GM12878 (cell line): ENCODE measurements at regions of chr12 and their contacts with region 1.

Region 1: GRCh38 chr12:85448548-85449139 is 168.6 kb downstream of the ALX1 start:
- DNase-seq: no peak
- ATAC-seq: peak; percentile 58
- H3K4me3 ChIP-seq: no peak overlapping the region
- H3K27ac ChIP-seq: no peak overlapping the region
- H3K4me1 ChIP-seq: no peaks in the 10 kb centered on the region
- H3K27me3 ChIP-seq: peaks cover 0 to 3% of the 10 kb centered on the region in 2 experiments; a peak in 1 of 4 replicates
- CTCF ChIP-seq: peak in 2 of 3 experiments; percentile 18 to 24; a peak in 3 of 6 replicates
- EP300 ChIP-seq: no peak
- POLR2A ChIP-seq: no peak
- RAD21 ChIP-seq: peak; percentile 66

Region 2: GRCh38 chr12:85076688-85077430 is 371.8 kb before region 1 on chr12:
- CTCF ChIA-PET with region 1: interaction called, 4 read pairs
- POLR2A ChIA-PET with region 1: no interaction called
- RAD21 ChIA-PET with region 1: interaction called, 9 read pairs
- SMC1A ChIA-PET with region 1: no interaction called
- in situ Hi-C with region 1: loop called (anchors 10 kb)
- intact Hi-C with region 1: loop called (anchors 5 kb)
- DNase-seq: no peak
- ATAC-seq: peak; percentile 88
- H3K4me3 ChIP-seq: no peak overlapping the region
- H3K27ac ChIP-seq: no peak overlapping the region
- H3K4me1 ChIP-seq: no peaks in the 10 kb centered on the region
- H3K27me3 ChIP-seq: no peaks in the 10 kb centered on the region
- CTCF ChIP-seq: peak; percentile 28 to 45 (median 30); a peak in 2 of 6 replicates
- EP300 ChIP-seq: no peak
- POLR2A ChIP-seq: no peak
- RAD21 ChIP-seq: peak; percentile 48; the same call in 1 of the 2 replicates

Region 3: GRCh38 chr12:85155787-85156186 is 292.9 kb before region 1 on chr12:
- CTCF ChIA-PET with region 1: no interaction called
- POLR2A ChIA-PET with region 1: no interaction called
- RAD21 ChIA-PET with region 1: no interaction called
- SMC1A ChIA-PET with region 1: no interaction called
- in situ Hi-C with region 1: no loop called
- intact Hi-C with region 1: loop called (anchors 10 kb)
- DNase-seq: no peak
- ATAC-seq: no peak
- H3K4me3 ChIP-seq: no peak overlapping the region
- H3K27ac ChIP-seq: no peak overlapping the region
- H3K4me1 ChIP-seq: no peaks in the 10 kb centered on the region
- H3K27me3 ChIP-seq: no peaks in the 10 kb centered on the region
- CTCF ChIP-seq: peak in 1 of 3 experiments; percentile 21; a peak in 1 of 6 replicates
- EP300 ChIP-seq: no peak
- POLR2A ChIP-seq: no peak
- RAD21 ChIP-seq: peak; percentile 35; the same call in 1 of the 2 replicates